ENCODE measurements at regions of chr1 and their contacts with region 1.

Region 1: GRCh38 chr1:108801101-108801500 is 54.6 kb downstream of the STXBP3 start:
- DNase-seq: no peak
- ATAC-seq: no peak
- H3K4me3 ChIP-seq: no peak overlapping the region
- H3K27ac ChIP-seq: no peak overlapping the region
- H3K4me1 ChIP-seq: no peaks in the 10 kb centered on the region
- H3K27me3 ChIP-seq: no peaks in the 10 kb centered on the region
- CTCF ChIP-seq: no peak

Region 2: DNA sequence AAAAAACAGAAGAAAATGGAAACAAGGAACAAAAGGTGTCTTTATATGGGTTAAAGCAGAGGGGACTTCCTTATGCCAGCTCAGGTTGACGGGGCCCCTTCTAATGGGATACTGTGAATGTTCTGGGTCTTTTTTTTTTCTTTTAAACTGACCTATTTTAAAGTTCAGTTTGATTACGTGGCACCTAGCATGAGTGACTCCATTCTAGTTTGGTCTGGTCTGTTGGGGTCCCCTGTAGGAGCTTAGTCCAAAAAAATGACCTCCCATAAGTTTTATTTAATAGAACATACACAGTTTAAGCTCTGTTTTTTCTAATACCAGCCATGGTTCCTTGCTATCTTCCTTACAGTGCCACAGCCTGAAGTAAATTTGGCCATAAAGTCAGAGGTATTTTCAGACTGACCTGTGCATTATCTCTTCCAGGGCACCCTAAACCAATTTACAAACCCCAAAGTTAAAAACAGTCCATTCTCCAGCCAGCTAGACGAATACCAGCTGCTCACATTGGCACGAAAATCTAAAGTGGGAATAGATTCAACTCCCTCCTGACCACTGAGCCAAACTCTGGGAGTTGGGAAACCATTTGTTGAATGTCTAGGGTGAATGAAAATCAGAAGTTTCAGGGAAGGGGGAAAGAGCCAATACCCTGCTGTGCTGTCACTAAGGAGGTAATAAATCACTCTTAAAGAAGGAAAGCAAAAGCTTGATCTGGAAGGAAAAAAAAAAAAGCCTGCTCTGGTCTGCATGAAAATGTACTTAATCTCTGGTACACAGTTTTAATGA is 13.4 kb after region 1 on chr1:
- CTCF ChIA-PET with region 1: no interaction called
- POLR2A ChIA-PET with region 1: no interaction called
- intact Hi-C with region 1: loop called (anchors 1 kb)
- DNase-seq: no peak
- ATAC-seq: no peak
- H3K4me3 ChIP-seq: no peak overlapping the region
- H3K27ac ChIP-seq: peak overlapping the region; percentile 59; the same call in 1 of the 2 replicates
- H3K4me1 ChIP-seq: peaks cover 38% of the 10 kb centered on the region
- H3K27me3 ChIP-seq: no peaks in the 10 kb centered on the region
- CTCF ChIP-seq: no peak

Region 3: GRCh38 chr1:108877348-108878159 is 76.5 kb after region 1 on chr1:
- CTCF ChIA-PET with region 1: no interaction called
- POLR2A ChIA-PET with region 1: no interaction called
- intact Hi-C with region 1: no loop called
- DNase-seq: peak; percentile 39
- ATAC-seq: peak; percentile 23
- H3K4me3 ChIP-seq: peak overlapping the region; percentile 87
- H3K27ac ChIP-seq: 0 out of 2 replicates have a peak overlapping the region, but pooled peaks have one; percentile 12
- H3K4me1 ChIP-seq: peaks cover 20% of the 10 kb centered on the region
- H3K27me3 ChIP-seq: no peaks in the 10 kb centered on the region
- CTCF ChIP-seq: no peak

Measured in PC-3 (cell line).